ENCODE measurements at regions of chr19 and their contacts with region 1.

Region 1: GRCh38 chr19:16324384-16325160 is at the start of gene KLF2:
- DNase-seq: peak; percentile 90
- H3K4me3 ChIP-seq: peak within 1 kb of the TSS; percentile 53 to 77 (median 66)
- H3K27ac ChIP-seq: peak within 1 kb of the TSS; percentile 84 to 92 (median 90)
- H3K4me1 ChIP-seq: peaks cover 4 to 37% (median 23%) of the 10 kb centered on the region in 4 donors
- H3K27me3 ChIP-seq: no peaks in the 10 kb centered on the region
- CTCF ChIP-seq: no peak
- EP300 ChIP-seq: no peak
- POLR2A ChIP-seq: peak; percentile 80
- total RNA-seq, gene KLF2: 19.9 to 74.4 (median 48.9) TPM

Region 2: GRCh38 chr19:16070366-16070990 is 254.1 kb before region 1 on chr19:
- in situ Hi-C with region 1: no loop called
- intact Hi-C with region 1: loop called (anchors 5 kb)
- DNase-seq: peak; percentile 96
- H3K4me3 ChIP-seq: peak overlapping the region in 3 of 4 donors; percentile 29 to 40 (median 31)
- H3K27ac ChIP-seq: peak overlapping the region; percentile 99 to 100 (median 100)
- H3K4me1 ChIP-seq: peaks cover 29 to 58% (median 38%) of the 10 kb centered on the region in 4 donors
- H3K27me3 ChIP-seq: no peaks in the 10 kb centered on the region
- CTCF ChIP-seq: peak in 1 of 5 experiments; percentile 33
- EP300 ChIP-seq: peak; percentile 3
- POLR2A ChIP-seq: peak; percentile 90

Region 3: GRCh38 chr19:16272945-16273344 is 51.6 kb before region 1 on chr19:
- in situ Hi-C with region 1: no loop called
- intact Hi-C with region 1: no loop called
- DNase-seq: no peak
- H3K4me3 ChIP-seq: no peak overlapping the region
- H3K27ac ChIP-seq: peak overlapping the region; percentile 41 to 83 (median 55)
- H3K4me1 ChIP-seq: peaks cover 0 to 8% (median 3%) of the 10 kb centered on the region in 4 donors
- H3K27me3 ChIP-seq: no peaks in the 10 kb centered on the region
- CTCF ChIP-seq: no peak
- EP300 ChIP-seq: no peak
- POLR2A ChIP-seq: no peak

Region 4: GRCh38 chr19:16283210-16284061 is 41.1 kb before region 1 on chr19:
- in situ Hi-C with region 1: no loop called
- intact Hi-C with region 1: loop called (anchors 5 kb)
- DNase-seq: peak; percentile 60
- H3K4me3 ChIP-seq: peak overlapping the region in 2 of 4 donors; percentile 11 to 24
- H3K27ac ChIP-seq: peak overlapping the region; percentile 79 to 89 (median 88)
- H3K4me1 ChIP-seq: peaks cover 0 to 42% (median 17%) of the 10 kb centered on the region in 4 donors
- H3K27me3 ChIP-seq: peaks cover 22% of the 10 kb centered on the region
- CTCF ChIP-seq: no peak
- EP300 ChIP-seq: peak; percentile 69
- POLR2A ChIP-seq: peak; percentile 70

Measured in transverse colon (tissue), 4 donors.